ENCODE measurements at regions of chr2 and their contacts with region 1.

Region 1: DNA sequence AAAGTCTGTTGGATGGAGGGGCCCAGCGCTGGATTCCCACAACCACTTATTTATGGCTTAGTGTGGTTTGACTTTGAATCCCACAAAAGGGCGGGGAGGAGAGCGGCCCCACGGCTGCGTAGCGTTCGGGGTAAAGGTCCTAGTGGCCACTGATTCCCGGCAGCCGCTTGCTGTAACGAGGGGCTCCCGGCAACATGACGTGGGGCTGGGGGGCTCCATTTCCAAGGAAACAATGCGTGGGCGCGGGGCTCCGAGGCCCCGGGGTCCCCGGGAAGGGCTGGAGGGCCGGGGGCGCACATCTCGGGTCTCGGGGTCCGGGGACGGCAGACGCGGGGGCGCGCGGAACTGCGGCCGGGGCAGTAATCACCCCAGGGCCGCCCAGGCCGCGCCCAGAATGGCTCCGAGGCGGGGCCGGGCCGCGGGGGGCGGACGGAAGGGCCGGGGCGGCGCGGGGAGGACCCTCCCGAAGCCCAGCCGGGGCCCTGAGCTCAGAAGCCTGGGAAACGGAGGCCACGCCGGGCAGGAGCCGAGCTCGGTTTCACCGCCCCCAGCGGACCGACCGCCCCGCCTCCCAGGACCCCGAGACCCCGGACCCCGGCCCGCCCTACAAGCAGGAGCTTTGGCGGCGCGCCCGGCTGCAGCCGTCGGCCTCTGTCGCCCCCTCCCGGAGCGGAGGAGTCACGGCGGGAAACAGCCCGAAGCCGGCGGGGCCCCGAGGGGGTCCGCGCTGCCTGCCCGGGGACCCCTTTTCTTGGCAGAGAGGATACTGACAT is 11.9 kb upstream of the MLPH start:
- DNase-seq: peak; percentile 83 to 93 (median 87)
- ATAC-seq: peak; percentile 43 to 88 (median 80)
- H3K4me3 ChIP-seq: peak overlapping the region; percentile 49 to 98 (median 76)
- H3K27ac ChIP-seq: peak overlapping the region; percentile 76 to 98 (median 94)
- H3K4me1 ChIP-seq: peaks cover 0 to 34% (median 17%) of the 10 kb centered on the region in 12 donors
- H3K27me3 ChIP-seq: peaks cover 0 to 18% (median 0%) of the 10 kb centered on the region in 9 donors
- CTCF ChIP-seq: peak; percentile 84 to 98 (median 93)
- POLR2A ChIP-seq: peak in 1 of 2 donors; percentile 57

Region 2: GRCh38 chr2:237092920-237093781 is 382.0 kb before region 1 on chr2:
- intact Hi-C with region 1: loop called in 1 of 10 experiments (anchors 5 kb)
- DNase-seq: peak in 3 of 5 donors; percentile 40 to 52 (median 43)
- ATAC-seq: peak; percentile 55 to 82 (median 77)
- H3K4me3 ChIP-seq: no peak overlapping the region
- H3K27ac ChIP-seq: peak overlapping the region in 5 of 12 donors; percentile 18 to 56 (median 53)
- H3K4me1 ChIP-seq: peaks cover 0 to 35% (median 19%) of the 10 kb centered on the region in 12 donors
- H3K27me3 ChIP-seq: no peaks in the 10 kb centered on the region
- CTCF ChIP-seq: peak; percentile 14 to 62 (median 48)
- POLR2A ChIP-seq: no peak

Region 3: DNA sequence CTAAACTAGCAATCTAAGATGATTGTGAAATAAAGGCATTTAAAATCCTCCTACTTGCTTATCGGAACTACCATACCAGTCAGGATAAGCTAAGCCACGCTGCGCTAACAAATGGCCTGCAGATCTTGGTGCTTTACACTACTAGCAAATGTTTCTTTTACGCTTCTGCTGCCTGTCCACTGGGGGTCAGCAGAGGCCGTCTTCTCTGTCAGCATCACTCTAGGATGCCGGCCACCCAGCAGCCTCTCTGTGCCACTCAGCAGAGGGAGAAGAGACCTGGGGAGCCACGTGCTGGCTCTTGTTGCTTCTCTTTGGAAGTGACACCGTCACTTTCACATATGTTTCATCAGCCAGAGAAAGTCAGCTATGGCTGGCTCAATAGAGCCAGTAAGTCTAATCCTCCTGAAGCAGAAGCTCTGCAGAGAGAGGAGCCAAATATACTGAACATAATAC is 352.9 kb before region 1 on chr2:
- intact Hi-C with region 1: loop called in 3 of 10 experiments (anchors 2 to 10 kb)
- DNase-seq: peak; percentile 55 to 83 (median 64)
- ATAC-seq: peak in 3 of 4 donors; percentile 76 to 92 (median 85)
- H3K4me3 ChIP-seq: no peak overlapping the region
- H3K27ac ChIP-seq: no peak overlapping the region
- H3K4me1 ChIP-seq: peaks cover 0 to 13% (median 0%) of the 10 kb centered on the region in 12 donors
- H3K27me3 ChIP-seq: no peaks in the 10 kb centered on the region
- CTCF ChIP-seq: peak; percentile 47 to 78 (median 68)
- POLR2A ChIP-seq: no peak

Region 4: DNA sequence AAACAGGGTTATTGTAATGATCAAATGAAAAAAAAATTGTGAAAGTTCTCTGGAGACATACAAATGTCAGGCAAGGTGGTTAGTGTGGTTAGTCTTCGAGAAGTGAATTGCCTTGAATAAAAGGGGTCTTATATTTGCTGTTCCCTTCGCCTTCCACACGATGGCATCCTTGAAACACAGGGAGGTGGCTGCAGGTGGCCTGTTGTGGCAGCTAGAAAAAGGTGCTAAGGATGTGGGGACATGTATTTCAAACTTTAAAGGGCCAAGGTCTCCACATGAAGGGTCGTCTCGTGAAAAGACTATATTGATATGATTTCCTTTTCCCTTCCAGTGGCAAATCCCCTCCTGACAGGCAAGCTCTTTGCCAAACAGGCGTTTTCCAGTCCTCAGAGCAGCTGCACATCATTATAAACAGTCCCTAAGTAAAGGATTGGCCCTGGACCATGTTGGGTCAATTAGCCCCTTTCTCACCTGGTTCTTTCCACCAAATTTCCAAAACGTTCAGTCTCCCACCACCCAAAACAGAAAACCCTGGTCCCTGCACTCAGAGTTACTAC is 321.0 kb before region 1 on chr2:
- intact Hi-C with region 1: loop called in 7 of 10 experiments (anchors 5 to 10 kb)
- DNase-seq: peak in 1 of 5 donors; percentile 45
- ATAC-seq: peak in 1 of 4 donors; percentile 22
- H3K4me3 ChIP-seq: no peak overlapping the region
- H3K27ac ChIP-seq: peak overlapping the region in 3 of 12 donors; percentile 55 to 77 (median 76)
- H3K4me1 ChIP-seq: peaks cover 0 to 33% (median 3%) of the 10 kb centered on the region in 12 donors
- H3K27me3 ChIP-seq: no peaks in the 10 kb centered on the region
- CTCF ChIP-seq: peak; percentile 44 to 68 (median 58)
- POLR2A ChIP-seq: no peak

Region 5: GRCh38 chr2:237421542-237422116 is 53.5 kb before region 1 on chr2:
- intact Hi-C with region 1: loop called (anchors 1 to 5 kb)
- DNase-seq: peak; percentile 73 to 86 (median 75)
- ATAC-seq: peak; percentile 73 to 91 (median 87)
- H3K4me3 ChIP-seq: peak overlapping the region in 7 of 12 donors; percentile 5 to 39 (median 23)
- H3K27ac ChIP-seq: peak overlapping the region in 7 of 12 donors; percentile 0 to 71 (median 41)
- H3K4me1 ChIP-seq: peaks cover 0 to 28% (median 13%) of the 10 kb centered on the region in 12 donors
- H3K27me3 ChIP-seq: no peaks in the 10 kb centered on the region
- CTCF ChIP-seq: peak; percentile 72 to 97 (median 82)
- POLR2A ChIP-seq: no peak

Region 6: DNA sequence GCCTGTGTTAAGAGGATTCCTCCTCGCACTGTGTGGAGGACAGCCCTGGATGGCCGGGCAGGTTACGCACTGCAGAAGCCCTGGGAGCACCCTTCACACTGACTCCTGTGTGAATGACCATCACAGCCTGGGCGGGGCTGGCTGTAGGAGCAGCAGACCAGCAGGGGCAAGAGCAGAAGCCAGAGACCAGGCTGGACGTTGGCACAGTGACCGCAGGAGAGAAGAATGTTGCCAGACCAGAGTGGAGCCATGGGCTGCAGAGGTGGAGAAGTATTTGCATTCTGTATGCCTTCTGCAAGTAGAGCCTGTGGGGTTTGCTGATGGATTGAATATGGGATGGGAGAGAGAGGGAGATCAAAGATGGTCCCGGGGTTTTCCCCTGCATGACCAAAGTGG is 175.3 kb after region 1 on chr2:
- intact Hi-C with region 1: no loop called
- DNase-seq: peak in 2 of 5 donors; percentile 12 to 26
- ATAC-seq: peak in 2 of 4 donors; percentile 6 to 7
- H3K4me3 ChIP-seq: no peak overlapping the region
- H3K27ac ChIP-seq: peak overlapping the region in 7 of 12 donors; percentile 19 to 79 (median 36)
- H3K4me1 ChIP-seq: peaks cover 0 to 64% (median 25%) of the 10 kb centered on the region in 12 donors
- H3K27me3 ChIP-seq: no peaks in the 10 kb centered on the region
- CTCF ChIP-seq: no peak
- POLR2A ChIP-seq: no peak